PC-3 (cell line): ENCODE measurements at regions of chr20 and their contacts with region 1.

Region 1: DNA sequence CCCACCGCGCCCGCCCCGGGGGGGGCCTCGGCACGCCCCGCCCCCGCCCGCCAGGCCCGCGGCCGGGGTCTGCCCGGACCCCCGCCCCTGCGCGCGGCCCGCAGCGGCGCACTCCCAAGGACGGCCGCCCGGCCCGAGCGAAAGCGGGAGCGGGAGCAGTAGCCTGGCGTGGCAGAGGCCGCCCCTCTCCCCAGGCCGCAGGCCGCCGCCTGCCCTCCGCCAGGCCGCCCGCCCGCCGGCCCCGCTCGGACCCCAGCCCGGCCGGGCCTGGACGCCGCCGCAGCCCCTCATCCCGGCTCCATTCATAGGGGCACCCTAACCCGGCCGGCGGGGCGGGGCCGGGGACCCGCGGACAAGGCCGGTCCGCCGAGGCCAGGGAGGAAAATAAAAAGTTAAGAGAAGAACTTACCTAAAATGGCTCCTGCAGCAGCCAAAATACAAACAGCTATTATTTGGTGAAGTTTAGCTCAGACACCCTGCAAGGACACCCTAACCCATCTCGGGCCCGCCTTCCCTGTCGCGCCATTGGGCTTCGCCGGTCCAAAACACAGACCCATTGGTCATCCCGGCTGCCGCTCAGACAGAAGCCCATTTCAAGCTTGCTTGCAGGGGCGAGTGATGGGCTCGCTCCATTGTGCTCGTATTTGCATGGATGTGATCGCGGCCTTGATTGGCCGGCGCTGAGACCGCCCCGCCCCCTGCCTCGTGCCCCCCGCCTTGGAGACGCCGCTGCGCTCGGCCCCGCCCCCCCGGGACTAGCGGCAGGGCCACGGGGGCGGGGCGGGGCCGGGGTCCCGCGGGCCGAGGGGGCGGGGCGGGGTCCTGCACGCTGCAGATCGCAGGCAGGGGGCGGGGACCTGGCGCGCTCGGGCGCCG is at the start of gene CHD6:
- DNase-seq: peak; percentile 100
- ATAC-seq: peak; percentile 97
- H3K4me3 ChIP-seq: peak within 1 kb of the TSS; percentile 80
- H3K27ac ChIP-seq: no peak within 1 kb of the TSS
- H3K4me1 ChIP-seq: peaks cover 15% of the 10 kb centered on the region
- H3K27me3 ChIP-seq: no peaks in the 10 kb centered on the region
- CTCF ChIP-seq: no peak
- total RNA-seq, gene CHD6: 19.5 and 34.7 TPM in 2 replicates

Region 2: GRCh38 chr20:41136680-41137613 is 481.2 kb before region 1 on chr20 and contains the start of gene PLCG1:
- CTCF ChIA-PET with region 1: no interaction called
- POLR2A ChIA-PET with region 1: no interaction called
- intact Hi-C with region 1: loop called (anchors 5 kb)
- DNase-seq: peak; percentile 85
- ATAC-seq: peak; percentile 78
- H3K4me3 ChIP-seq: peak within 1 kb of the TSS; percentile 92
- H3K27ac ChIP-seq: peak within 1 kb of the TSS; percentile 34
- H3K4me1 ChIP-seq: peaks cover 21% of the 10 kb centered on the region
- H3K27me3 ChIP-seq: no peaks in the 10 kb centered on the region
- CTCF ChIP-seq: no peak
- total RNA-seq, gene PLCG1: 68.8 and 112 TPM in 2 replicates

Region 3: DNA sequence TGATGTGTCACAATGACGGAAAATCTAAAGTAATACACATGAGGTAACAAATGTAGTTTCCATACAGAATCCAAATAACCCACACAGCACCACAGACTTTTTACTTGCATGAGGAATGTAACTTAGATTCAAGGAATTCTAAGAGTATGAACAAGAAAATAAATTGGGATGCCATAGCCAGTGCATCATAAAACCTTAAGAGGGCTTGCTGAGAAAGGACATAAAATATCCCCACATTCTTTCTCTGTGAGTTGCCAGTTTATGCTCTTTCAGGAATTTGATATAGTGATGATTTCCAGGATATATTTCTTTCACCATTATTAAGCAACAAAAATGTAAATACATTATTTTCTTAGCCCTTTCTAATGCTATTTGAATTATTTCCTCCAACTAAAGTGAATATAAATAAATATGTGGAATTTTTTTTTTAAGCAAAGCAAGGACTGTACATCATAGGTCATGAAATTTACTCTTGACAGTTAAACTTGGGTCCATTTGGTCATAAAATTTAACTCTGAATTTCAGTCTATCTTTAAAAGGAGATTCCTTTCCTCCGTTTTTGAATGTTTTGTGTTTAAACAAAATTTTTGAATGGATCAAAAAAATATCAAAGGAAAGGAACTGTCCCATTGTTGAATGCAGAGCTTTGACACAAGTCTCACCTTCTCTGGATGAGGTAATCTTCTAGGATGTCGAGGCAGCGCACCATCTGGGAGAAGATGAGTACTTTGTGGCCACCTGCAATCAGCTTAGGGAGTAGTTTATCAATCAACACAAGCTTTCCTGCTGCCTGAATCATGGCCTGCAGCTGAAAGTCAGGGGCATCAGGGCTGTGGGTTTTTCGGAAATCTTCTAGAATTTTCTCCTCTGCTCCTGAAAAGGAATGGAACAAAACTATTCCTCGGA is 135.3 kb before region 1 on chr20:
- CTCF ChIA-PET with region 1: no interaction called
- POLR2A ChIA-PET with region 1: no interaction called
- intact Hi-C with region 1: loop called (anchors 5 kb)
- DNase-seq: peak; percentile 62
- ATAC-seq: peak; percentile 79
- H3K4me3 ChIP-seq: no peak overlapping the region
- H3K27ac ChIP-seq: no peak overlapping the region
- H3K4me1 ChIP-seq: peaks cover 18% of the 10 kb centered on the region
- H3K27me3 ChIP-seq: no peaks in the 10 kb centered on the region
- CTCF ChIP-seq: no peak

Region 4: GRCh38 chr20:41693136-41693979 is 75.2 kb after region 1 on chr20:
- CTCF ChIA-PET with region 1: no interaction called
- POLR2A ChIA-PET with region 1: interaction called, 6 read pairs
- intact Hi-C with region 1: loop called (anchors 1 kb)
- DNase-seq: peak; percentile 91
- ATAC-seq: peak; percentile 95
- H3K4me3 ChIP-seq: peak overlapping the region; percentile 76
- H3K27ac ChIP-seq: no peak overlapping the region
- H3K4me1 ChIP-seq: peaks cover 3% of the 10 kb centered on the region; the same call in 1 of the 2 replicates
- H3K27me3 ChIP-seq: peaks cover 4% of the 10 kb centered on the region; the same call in 1 of the 2 replicates
- CTCF ChIP-seq: peak; percentile 90